ENCODE measurements at regions of chr4 and their contacts with region 1.

Region 1: DNA sequence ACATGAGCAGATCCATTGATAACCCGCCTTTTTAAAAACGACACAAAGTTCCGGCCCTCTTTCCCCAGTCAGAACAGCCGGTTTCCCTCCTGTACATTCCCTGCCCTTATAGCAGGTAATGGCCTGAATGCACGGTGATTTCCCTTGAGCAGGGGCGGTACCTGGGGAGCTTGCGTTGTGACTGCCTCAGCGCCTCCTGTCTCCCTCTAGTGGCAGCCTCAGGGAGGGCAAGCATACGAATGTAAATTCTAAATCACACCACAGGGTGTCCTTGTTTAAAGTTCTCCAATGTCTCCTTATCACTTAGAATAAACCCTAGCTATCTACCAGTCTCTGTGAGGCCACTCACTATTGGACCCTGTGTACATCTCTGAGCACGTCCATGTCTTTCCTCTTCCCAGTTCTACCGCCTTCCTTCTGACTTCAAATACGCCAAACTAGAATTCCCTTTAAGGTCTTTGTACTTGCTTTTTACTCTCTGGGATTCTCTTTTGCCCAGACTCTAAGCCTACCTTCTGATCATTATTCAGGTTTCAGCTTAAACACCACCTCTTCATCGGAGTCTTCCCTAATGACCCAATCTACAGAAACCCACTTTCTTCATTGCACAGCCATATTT is 18.4 kb upstream of the LDB2 start:
- DNase-seq: peak; percentile 74
- H3K4me3 ChIP-seq: no peak overlapping the region
- H3K27ac ChIP-seq: no peak overlapping the region
- H3K4me1 ChIP-seq: peaks cover 9% of the 10 kb centered on the region
- H3K27me3 ChIP-seq: no peaks in the 10 kb centered on the region
- CTCF ChIP-seq: peak; percentile 87 to 93
- POLR2A ChIP-seq: no peak

Region 2: GRCh38 chr4:16764622-16765021 is 152.2 kb before region 1 on chr4:
- CTCF ChIA-PET with region 1: interaction called, 16 read pairs
- POLR2A ChIA-PET with region 1: no interaction called
- dilution Hi-C with region 1: no loop called
- intact Hi-C with region 1: no loop called
- DNase-seq: peak; percentile 21
- H3K4me3 ChIP-seq: no peak overlapping the region
- H3K27ac ChIP-seq: no peak overlapping the region
- H3K4me1 ChIP-seq: no peaks in the 10 kb centered on the region
- H3K27me3 ChIP-seq: no peaks in the 10 kb centered on the region
- CTCF ChIP-seq: peak; percentile 16 to 38
- POLR2A ChIP-seq: no peak

Region 3: DNA sequence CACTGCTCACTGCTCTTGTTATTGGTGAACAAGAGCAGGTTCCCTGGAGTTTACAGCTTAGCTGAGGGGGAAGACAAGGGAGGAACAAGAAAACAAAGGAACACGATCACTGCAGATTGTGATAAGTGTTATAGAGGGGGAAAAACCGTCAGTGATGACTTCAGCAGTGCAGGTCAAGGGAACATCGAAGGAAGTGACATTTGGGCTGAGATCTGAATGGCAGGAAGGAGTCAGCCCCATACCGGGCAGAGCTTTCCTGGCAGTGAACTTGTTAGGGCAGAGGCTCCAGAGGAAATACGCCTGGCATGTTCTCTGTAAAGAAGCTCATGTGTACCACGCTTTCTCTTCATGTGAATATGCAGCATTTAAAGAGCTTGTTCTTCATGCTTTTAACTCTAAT is 96.5 kb before region 1 on chr4:
- CTCF ChIA-PET with region 1: interaction called, 12 read pairs
- POLR2A ChIA-PET with region 1: no interaction called
- dilution Hi-C with region 1: no loop called
- intact Hi-C with region 1: no loop called
- DNase-seq: peak; percentile 94
- H3K4me3 ChIP-seq: peak overlapping the region in 1 of 3 experiments; percentile 57
- H3K27ac ChIP-seq: peak overlapping the region; percentile 85
- H3K4me1 ChIP-seq: peaks cover 25% of the 10 kb centered on the region
- H3K27me3 ChIP-seq: no peaks in the 10 kb centered on the region
- CTCF ChIP-seq: no peak
- POLR2A ChIP-seq: peak; percentile 50

Region 4: DNA sequence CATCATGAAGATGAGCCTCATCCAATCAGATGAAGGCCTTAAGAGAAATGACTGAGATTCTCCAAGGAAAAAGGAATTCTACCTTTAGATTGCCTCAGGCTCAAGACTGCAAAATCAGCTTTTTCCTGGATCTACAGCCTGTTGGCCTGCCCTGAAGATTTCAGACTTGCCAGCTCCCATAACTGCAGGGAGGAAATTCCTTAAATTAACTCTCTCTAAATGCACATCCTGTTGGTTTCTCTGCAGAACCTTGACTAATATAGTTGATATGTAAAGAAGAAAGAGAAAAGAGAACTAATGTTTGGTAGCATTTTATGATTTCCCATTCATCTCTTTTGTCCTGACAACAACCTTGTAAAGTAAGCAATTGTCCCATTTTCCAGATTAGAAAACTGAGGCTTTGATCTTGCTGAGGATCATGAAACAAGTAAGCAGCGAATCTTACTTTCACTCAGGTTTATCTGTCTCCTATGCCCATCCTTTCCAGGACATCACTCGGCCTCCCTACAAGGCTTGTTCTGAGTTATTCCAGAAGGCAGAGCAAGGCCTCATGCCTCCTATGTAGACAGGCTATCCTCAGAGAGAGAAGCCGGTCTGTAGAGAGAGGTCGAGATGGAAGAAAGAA is 96.7 kb after region 1 on chr4:
- CTCF ChIA-PET with region 1: interaction called, 7 read pairs
- POLR2A ChIA-PET with region 1: no interaction called
- dilution Hi-C with region 1: no loop called
- intact Hi-C with region 1: loop called (anchors 5 kb)
- DNase-seq: peak; percentile 80
- H3K4me3 ChIP-seq: no peak overlapping the region
- H3K27ac ChIP-seq: no peak overlapping the region
- H3K4me1 ChIP-seq: peaks cover 24% of the 10 kb centered on the region
- H3K27me3 ChIP-seq: no peaks in the 10 kb centered on the region
- CTCF ChIP-seq: no peak
- POLR2A ChIP-seq: no peak

Region 5: GRCh38 chr4:17324386-17324830 is 407.6 kb after region 1 on chr4:
- CTCF ChIA-PET with region 1: interaction called, 92 read pairs
- POLR2A ChIA-PET with region 1: no interaction called
- dilution Hi-C with region 1: no loop called
- intact Hi-C with region 1: loop called (anchors 1 kb)
- DNase-seq: peak; percentile 72
- H3K4me3 ChIP-seq: no peak overlapping the region
- H3K27ac ChIP-seq: no peak overlapping the region
- H3K4me1 ChIP-seq: peaks cover 22% of the 10 kb centered on the region
- H3K27me3 ChIP-seq: no peaks in the 10 kb centered on the region
- CTCF ChIP-seq: peak; percentile 50 to 53
- POLR2A ChIP-seq: no peak